ENCODE measurements at regions of chr17 and their contacts with region 1.

Region 1: DNA sequence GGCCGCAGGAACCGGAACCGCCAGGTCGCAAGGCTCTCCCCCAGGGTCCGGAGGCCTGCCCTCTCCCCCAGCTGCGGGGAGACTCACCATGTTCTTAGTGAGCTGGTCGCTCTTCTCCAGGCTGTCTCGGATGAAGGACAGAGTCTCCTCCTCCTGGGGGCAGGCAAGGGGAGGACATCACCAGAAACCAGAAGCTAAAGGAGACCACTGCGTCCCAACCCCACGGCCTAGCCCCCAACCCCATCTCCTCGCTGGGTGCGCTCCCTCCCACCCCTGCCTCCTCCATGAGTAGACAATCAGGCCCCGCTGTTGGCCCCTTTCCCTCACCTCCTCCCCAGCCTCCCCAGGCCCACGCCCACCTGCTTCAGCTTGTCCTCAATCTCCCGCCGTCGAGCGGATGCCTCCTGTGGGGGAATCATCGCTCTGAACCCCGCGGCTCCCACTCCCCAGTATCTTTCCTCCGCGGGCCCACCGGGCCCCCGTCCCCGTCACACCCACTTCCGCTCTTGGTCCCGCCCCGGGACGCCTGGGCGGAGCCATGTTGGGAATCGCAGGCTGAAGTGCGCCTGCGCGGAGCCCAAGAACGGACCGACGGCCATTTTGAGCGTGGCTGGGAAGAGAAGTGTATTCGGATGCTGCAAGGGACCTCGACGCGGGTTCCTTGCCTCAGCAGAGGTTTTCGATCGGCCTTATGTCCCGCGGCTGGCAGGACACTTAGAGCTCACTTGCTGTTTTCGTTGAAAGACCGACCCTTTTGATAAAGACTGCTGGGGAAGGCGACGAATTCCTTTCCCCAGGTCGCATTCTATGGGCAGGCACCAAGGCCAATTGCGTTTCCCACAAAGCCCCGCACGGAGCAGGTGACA is at the start of gene EXOC7:
- H3K4me3 ChIP-seq: peak within 1 kb of the TSS; percentile 71
- H3K27ac ChIP-seq: peak within 1 kb of the TSS; percentile 83
- H3K4me1 ChIP-seq: 0 out of 2 replicates have a peak, but pooled peaks cover 4% of the 10 kb centered on the region
- CTCF ChIP-seq: peak; percentile 26; the same call in 1 of the 2 replicates

Region 2: DNA sequence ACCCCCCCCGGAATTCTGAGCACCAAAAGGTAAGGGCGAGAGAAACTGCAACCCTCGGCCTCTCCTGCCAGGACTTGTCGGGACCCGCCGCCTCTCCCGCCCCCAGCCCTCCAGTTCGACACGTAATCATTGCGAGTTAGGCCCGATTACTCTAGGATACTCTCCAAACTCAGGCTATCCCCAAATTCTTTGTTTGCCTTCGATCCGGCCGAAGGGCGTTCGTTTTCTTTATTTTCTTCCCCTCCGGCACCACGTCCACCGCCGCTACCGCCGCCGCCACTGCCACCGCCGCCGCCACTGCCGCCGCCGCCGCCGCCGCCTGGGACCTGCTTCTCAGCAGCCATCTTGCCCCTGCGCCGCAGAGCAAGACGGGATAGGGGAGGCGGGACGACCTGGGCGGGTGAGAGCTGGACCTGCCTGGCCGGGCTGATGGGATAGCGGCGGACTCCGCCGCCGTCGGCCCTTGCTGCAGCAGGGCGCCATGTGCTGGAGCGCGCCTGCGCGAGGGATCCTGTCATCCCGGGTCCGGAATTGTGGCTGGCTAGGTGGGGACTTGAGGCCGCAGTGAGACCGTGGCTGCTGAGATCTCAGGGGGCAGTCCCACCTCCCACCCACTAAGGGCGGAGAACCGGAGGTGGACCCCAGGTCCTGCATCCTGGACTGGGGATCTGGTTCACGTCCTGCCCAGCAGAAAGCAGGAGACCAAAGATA is 31.2 kb before region 1 on chr17 and contains the start of gene SRP68:
- CTCF ChIA-PET with region 1: interaction called, 4 read pairs
- POLR2A ChIA-PET with region 1: interaction called, 11 read pairs
- H3K4me3 ChIP-seq: peak within 1 kb of the TSS; percentile 93
- H3K27ac ChIP-seq: peak within 1 kb of the TSS; percentile 83
- H3K4me1 ChIP-seq: peaks cover 11% of the 10 kb centered on the region
- CTCF ChIP-seq: no peak

Region 3: DNA sequence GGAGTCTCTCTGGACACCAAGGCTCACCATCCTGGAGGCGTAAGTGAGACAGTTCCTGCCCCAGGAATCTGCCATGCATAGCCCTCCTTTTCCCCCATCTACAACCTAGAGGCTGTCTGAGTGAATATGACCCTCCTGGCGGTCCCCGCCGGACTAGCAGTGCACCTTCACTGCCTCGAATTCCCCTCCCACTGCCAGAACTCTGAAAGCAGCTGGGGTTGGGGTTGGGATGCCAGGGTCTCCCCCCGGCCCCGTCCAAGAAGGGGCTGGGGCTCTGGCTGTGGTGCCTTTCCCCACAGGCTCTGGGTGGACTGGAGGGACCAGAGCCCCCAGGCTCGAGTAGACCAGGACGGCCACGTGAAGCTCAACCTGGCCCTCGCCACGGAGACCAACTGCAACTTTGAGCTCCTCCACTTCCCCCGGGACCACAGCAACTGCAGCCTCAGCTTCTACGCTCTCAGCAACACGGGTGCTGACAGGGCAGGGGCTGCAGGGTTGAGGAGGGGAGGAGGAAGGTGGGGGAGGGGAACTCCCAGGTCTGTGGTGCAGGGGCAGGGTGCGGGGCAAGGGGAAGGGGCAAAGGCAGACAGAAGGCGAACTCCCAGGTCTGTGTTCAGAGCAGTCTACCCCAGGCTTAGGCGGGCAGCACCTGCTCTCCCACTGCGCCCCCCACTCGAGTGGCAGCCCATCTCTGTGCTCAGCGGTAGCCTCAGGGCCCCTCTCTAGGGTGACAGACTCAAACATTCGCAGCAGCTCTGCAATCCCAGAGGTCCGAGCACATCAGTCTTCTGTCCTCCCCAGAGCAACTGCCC is 23.3 kb before region 1 on chr17:
- CTCF ChIA-PET with region 1: interaction called, 4 read pairs
- POLR2A ChIA-PET with region 1: interaction called, 23 read pairs
- H3K4me3 ChIP-seq: no peak overlapping the region
- H3K27ac ChIP-seq: no peak overlapping the region
- H3K4me1 ChIP-seq: peaks cover 16% of the 10 kb centered on the region
- CTCF ChIP-seq: no peak

Region 4: DNA sequence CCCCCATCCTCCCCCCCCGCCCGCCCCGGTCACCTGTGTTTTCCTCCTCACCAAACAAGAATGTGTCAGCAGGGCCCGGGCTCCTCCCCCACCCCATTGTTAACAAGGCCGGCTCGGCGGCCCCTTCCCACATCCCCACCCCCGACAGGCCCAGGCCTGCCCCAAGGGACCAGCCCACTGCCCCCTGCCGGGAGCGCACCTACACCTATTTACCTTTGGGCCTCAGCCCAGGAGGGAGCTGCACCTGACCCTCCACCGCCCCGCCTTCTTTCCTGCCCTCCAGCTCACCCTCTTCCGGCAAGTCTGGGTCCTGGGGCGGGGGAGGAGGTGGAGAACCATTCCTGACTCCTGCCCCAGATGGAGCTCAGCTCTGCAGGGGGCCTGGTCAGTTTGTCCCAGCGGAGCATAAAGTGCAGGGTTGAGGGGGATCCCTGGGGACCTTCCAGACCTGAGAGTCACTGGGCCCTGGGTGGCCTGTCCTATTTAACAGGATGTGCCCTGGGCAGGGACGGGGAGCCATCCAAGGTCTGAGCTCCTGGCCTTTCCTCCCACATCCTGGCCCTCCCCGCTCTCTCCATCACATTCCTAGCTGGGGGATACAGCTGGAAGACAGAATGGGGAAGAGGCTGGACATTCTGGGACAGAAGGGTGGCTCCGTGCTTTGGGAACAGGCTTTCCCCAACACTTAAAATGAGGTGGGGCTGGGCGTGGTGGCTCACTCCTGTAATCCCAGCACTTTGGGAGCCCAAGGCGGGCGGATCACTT is 29.2 kb after region 1 on chr17:
- CTCF ChIA-PET with region 1: interaction called, 4 read pairs
- POLR2A ChIA-PET with region 1: interaction called, 11 read pairs
- H3K4me3 ChIP-seq: no peak overlapping the region
- H3K27ac ChIP-seq: no peak overlapping the region
- H3K4me1 ChIP-seq: peaks cover 4% of the 10 kb centered on the region
- CTCF ChIP-seq: no peak

Measured in HEK293 (cell line).